Activated CD8-positive, alpha-beta T cell treated with anti-CD3 and anti-CD28 coated beads, Interleukin-2, amount 10 ng/mL, durations not matched to agents 7 days and 5 days (primary cell): ENCODE measurements at regions of chr7 and their contacts with region 1.

Region 1: DNA sequence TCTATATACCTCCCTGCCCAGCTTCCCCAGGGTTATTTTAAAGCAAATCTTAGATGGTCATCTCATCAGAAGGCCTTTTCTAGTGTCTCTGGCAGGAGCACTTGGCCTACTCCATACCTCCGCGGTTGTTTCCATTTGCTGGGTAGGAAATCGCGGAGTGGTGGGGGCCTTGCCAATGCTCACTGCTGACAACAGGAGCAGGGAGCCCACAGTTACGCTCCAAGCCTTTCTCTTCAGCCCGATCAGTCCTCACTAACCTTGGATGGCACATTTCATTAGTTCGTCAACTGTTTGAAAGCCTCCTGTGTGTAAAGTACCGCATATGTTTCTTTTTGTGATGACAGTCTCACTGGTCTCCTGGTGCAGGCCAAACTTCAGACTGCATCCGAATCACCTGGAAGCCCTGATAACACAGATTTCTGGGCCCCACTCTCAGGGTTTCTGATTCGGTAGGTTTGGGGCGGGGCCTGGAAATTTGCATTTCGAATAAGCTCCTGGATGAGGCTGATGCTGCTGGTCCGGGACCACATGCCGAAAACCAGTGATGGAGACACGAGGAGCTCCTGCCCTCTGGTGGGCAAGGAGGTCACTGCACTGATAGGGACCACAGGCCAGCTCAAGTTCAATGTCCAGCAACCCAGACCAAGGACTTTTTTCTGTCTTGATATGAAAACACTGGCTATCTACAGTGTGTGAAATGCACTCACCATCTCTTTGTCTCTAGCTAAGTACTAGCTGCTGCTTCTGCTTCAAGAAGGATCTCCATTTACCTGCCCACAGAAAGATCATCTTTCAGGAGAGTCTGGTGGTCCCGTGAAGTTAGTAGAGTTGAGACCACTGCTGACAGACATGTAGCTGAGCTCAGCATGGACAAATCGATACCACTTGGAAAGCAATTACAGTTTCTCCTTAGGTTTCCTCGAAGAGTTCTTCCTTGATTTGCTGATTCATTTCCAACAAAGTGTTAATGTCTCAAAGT is 14.0 kb downstream of the LRGUK start:
- DNase-seq: peak; percentile 64
- ATAC-seq: peak; percentile 77
- H3K4me3 Mint-ChIP-seq: no peak overlapping the region
- H3K27ac Mint-ChIP-seq: no peak overlapping the region
- H3K4me1 Mint-ChIP-seq: peaks cover 4% of the 10 kb centered on the region
- H3K27me3 Mint-ChIP-seq: no peaks in the 10 kb centered on the region

Region 2: GRCh38 chr7:134126966-134127848 is 14.0 kb before region 1 on chr7 and contains the start of gene LRGUK:
- CTCF ChIA-PET with region 1: interaction called, 25 read pairs
- POLR2A ChIA-PET with region 1: no interaction called
- DNase-seq: peak; percentile 85
- ATAC-seq: peak; percentile 100
- H3K4me3 Mint-ChIP-seq: peak within 1 kb of the TSS; percentile 69
- H3K27ac Mint-ChIP-seq: no peak within 1 kb of the TSS
- H3K4me1 Mint-ChIP-seq: peaks cover 16% of the 10 kb centered on the region
- H3K27me3 Mint-ChIP-seq: peaks cover 31% of the 10 kb centered on the region
- total RNA-seq, gene LRGUK: 0.13 to 0.18 TPM

Region 3: DNA sequence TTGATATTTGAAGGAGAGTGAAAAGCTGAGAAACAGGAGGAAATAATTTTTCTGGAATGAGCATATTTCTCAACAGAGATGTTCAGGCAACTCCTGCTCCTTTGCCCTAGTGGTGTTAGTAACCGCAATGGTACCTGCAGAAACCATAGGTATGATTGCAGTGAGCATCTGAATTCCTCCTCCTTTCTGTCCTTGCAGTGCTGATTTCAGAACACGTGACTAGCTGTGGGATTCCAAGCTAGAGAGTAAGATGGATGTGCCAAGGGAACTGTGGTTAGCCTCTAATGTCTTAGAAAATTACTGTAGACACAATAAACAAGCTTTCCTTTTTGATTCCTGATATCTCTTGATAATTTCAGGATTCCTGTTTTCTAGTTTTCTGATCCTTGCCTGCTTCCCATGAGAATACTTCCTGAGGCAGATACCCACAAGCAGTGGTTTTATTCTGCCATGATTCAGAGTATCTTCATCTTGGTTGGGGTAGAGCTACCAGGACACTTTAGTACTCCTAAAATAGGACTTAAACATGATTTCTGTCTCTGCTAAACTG is 13.5 kb after region 1 on chr7:
- CTCF ChIA-PET with region 1: interaction called, 13 read pairs
- POLR2A ChIA-PET with region 1: no interaction called
- DNase-seq: no peak
- ATAC-seq: no peak
- H3K4me3 Mint-ChIP-seq: no peak overlapping the region
- H3K27ac Mint-ChIP-seq: no peak overlapping the region
- H3K4me1 Mint-ChIP-seq: peaks cover 2% of the 10 kb centered on the region
- H3K27me3 Mint-ChIP-seq: peaks cover 6% of the 10 kb centered on the region